ENCODE measurements at regions of chr9 and their contacts with region 1.

Region 1: GRCh38 chr9:73667717-73668116 is 516.1 kb downstream of the ANXA1 start:
- DNase-seq: no peak

Region 2: DNA sequence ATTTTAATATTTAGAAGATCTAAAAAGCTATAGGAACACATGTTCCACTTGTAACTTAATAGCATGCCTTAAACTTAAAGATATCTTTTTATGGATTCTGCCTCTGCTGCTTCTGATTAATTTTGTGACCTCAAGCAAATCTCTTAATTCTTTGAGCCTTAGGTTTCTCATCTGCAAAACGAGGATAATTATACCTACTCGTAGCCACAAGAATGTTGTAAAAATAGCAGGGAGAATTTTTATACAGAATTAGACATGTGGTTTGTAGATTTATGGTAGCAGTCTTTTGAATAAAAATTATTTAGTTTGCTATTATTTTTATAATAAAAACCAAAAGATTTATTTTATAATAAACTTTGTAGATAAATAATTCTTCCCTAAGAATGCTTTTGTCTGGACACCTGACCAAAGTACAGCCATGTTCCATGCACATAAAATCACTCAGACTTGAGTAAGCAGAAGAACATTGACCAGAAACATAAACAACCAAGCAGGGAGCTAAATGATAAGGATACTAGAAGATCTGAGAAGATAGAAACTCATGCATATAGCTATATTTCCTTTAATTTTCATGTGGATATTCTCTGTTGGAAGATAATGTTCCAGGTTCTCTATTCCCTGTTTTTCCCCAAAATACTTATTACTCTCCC is 1737.8 kb before region 1 on chr9:
- intact Hi-C with region 1: loop called in 1 of 2 experiments (anchors 10 kb)
- DNase-seq: no peak

Region 3: GRCh38 chr9:73104342-73104741 is 563.4 kb before region 1 on chr9:
- intact Hi-C with region 1: no loop called
- DNase-seq: no peak

Measured in posterior vena cava (tissue), 2 donors.